Posterior cingulate gyrus (tissue), 11 donors: ENCODE measurements at regions of chr19 and their contacts with region 1.

Region 1: DNA sequence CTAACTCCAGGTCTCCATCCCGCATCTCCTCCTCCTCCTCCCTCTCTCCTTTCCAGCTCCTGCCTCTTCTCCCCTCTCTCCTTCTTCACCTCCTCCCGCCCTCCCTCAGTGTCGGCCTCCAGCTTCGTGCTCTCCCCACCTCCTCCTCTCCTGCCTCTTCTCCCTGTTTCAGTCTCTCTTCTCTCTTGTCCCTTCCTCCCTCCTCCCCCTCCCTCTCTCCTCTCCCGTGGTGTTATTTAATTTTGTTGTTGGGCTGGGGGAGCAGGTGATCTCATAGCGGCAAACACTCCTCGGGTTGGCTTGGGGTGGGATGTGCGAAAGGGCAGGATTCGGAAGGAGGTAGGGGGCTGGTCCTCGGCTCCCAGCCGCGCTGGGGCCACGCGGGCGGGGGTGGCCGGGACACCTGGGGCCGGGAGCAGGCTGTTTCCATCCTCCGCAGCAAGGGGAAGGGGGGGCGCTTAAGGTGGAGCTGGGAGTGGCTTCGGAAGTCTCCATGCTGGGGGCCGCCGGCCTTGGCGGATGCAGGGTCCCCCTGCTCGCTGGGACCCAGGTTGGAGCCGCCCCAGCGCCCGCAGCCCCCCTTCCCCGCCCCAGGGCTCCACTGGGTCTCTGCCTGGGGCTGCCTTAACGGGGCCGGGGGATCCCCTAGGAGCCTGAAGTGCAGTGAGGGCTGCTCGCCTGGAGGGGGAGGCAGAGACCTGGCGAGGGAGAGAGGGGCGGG is at the start of gene CA11:
- DNase-seq: peak; percentile 81 to 98 (median 88)

Region 2: DNA sequence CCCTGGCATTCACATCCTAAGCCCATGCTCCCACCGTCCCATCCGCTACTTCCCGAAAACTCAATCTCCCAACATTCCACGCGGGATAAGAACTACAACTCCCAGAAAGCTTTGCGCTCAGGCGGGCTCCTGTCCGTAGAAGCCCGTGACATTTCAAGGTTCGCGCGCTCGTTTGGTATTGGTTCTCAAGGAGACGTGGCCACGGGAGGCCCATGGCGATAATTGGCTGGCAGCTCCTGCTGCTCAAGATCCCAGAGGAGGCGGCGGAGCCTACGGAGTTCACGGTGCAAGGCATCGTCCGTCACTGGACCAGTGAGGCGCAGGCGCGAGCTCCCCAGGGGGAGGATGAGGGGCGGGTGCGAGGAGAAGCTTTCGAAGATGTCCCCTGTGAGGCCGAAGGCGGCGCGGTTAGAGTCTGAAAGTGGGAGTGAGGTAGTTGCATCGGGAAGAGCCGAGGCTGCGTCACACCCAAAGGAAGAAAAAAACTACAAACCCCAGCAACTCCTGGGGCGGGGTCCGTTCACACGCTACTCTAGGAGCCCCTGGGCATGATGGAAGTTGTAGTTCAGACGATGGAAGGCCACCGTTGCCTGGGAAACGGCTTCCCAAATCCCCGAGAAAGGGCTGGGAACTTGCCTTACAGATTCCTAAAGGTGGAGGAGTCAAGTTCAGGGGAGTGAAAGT is 74.6 kb after region 1 on chr19:
- intact Hi-C with region 1: loop called (anchors 5 kb)
- DNase-seq: peak; percentile 98 to 100 (median 100)

Region 3: GRCh38 chr19:48795055-48795684 is 149.0 kb after region 1 on chr19:
- intact Hi-C with region 1: no loop called
- DNase-seq: peak; percentile 88 to 99 (median 94)

Region 4: DNA sequence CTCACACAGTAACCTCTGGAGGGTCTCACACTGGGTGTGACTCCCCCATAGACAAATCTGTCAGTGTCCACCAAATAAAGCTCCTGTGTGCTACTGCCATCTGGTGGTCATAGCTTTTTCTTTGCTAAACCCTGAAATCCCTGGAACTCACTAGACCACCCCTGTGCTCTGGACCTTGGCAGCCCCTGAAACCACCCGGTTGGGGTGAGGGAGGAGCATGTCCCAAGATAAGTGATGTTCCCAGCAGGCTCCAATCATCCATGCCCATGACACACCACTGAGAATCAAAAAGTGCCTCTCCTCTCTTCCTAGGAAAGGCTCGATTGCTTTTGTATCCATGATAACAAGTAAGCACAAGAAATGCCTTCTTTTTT is 196.6 kb after region 1 on chr19:
- intact Hi-C with region 1: loop called (anchors 2 kb)
- DNase-seq: peak in 4 of 10 donors; percentile 34 to 50 (median 42)